ENCODE measurements at regions of chr1 and their contacts with region 1.

Region 1: GRCh38 chr1:59323879-59324278 is 27.0 kb downstream of the FGGY start:
- DNase-seq: no peak
- H3K4me3 ChIP-seq: no peak overlapping the region
- H3K27ac ChIP-seq: no peak overlapping the region
- H3K4me1 ChIP-seq: no peaks in the 10 kb centered on the region
- H3K27me3 ChIP-seq: no peaks in the 10 kb centered on the region
- CTCF ChIP-seq: no peak
- POLR2A ChIP-seq: no peak

Region 2: DNA sequence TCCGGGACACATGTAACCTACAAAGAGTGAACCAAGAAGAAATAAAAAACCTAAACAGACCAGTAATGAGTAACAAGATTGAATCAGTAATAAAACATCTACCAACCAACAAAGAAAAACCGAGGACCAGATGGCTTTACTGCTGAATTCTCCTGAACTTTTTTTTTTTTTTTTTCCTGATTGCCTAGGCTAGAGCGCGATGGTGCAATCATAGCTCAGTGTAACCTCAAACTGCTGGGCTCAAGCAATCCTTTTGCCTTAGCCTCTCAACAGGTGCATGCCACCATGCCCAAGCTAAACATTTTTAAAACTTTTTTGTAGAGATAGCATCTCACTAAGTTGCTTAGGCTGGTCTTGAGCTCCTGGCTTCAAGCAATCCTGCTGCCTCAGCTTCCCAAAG is 38.2 kb before region 1 on chr1:
- intact Hi-C with region 1: no loop called
- DNase-seq: no peak
- H3K4me3 ChIP-seq: no peak overlapping the region
- H3K27ac ChIP-seq: no peak overlapping the region
- H3K4me1 ChIP-seq: no peaks in the 10 kb centered on the region
- H3K27me3 ChIP-seq: no peaks in the 10 kb centered on the region
- CTCF ChIP-seq: no peak
- POLR2A ChIP-seq: no peak

Region 3: GRCh38 chr1:59367301-59368007 is 43.6 kb after region 1 on chr1:
- intact Hi-C with region 1: loop called (anchors 5 kb)
- DNase-seq: no peak
- H3K4me3 ChIP-seq: no peak overlapping the region
- H3K27ac ChIP-seq: peak overlapping the region; percentile 9 to 16
- H3K4me1 ChIP-seq: peaks cover 3% of the 10 kb centered on the region
- H3K27me3 ChIP-seq: no peaks in the 10 kb centered on the region
- CTCF ChIP-seq: no peak
- POLR2A ChIP-seq: no peak

Measured in prostate gland (tissue), 2 donors.